Dorsolateral prefrontal cortex (tissue), 120 donors: ENCODE measurements at regions of chr1 and their contacts with region 1.

Region 1: GRCh38 chr1:95233737-95234500 is at the start of gene RWDD3:
- DNase-seq: peak; percentile 76 to 95 (median 87)
- H3K4me3 ChIP-seq: peak within 1 kb of the TSS; percentile 68 to 98 (median 89)
- H3K27ac ChIP-seq: peak within 1 kb of the TSS; percentile 51 to 98 (median 92)
- H3K27me3 ChIP-seq: no peaks in the 10 kb centered on the region
- CTCF ChIP-seq: peak; percentile 48 to 98 (median 87)
- total RNA-seq, gene RWDD3: 8.8 to 33.0 (median 17.9) TPM

Region 2: DNA sequence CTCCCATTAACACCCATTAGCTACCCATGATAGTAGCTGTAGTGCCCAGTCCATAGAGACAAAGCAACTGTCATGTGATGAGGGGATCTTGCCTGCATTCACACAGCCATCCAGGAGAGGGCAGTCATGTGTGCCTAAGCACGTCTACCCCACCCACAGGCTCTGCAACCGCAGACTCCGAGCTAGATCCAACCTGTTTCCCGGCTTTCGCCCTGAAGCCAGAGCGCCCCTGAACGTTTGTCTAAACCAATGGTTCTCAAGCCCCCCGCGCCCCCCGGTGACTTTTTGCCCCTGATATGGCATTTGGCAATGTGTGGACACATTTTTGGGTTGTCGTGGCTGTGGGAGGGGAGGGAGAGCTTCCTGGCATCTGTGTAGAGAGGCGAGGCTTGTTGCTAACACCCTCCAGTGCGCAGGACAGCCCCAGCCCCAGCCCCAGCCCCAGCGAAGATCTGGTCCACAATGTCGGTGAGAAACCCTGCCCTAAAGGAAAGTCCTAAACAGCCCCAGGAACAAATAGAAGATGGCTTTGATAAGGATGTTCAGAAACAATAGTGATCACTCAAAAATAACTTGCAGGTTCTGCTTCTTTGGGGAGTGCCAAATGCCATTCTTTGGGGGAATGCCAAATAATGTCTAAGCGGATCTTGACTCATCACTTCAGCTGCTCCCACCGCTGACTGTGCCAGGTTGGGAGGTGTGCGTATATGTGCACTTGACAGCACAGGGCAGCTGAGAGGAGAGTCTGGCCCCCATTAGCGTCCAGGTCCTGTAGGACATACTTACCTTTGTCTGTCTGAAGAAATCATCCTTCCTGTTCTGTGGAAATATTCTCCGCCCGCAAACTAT is 379.2 kb before region 1 on chr1:
- intact Hi-C with region 1: loop called in 1 of 2 experiments (anchors 2 kb)
- DNase-seq: peak; percentile 73 to 92 (median 86)
- H3K4me3 ChIP-seq: peak overlapping the region; percentile 9 to 74 (median 51)
- H3K27ac ChIP-seq: peak overlapping the region in 39 of 59 donors; percentile 6 to 81 (median 51)
- H3K27me3 ChIP-seq: no peaks in the 10 kb centered on the region
- CTCF ChIP-seq: peak; percentile 76 to 98 (median 94)

Region 3: GRCh38 chr1:94863919-94864318 is 370.0 kb before region 1 on chr1:
- intact Hi-C with region 1: loop called in 1 of 2 experiments (anchors 5 kb)
- DNase-seq: peak in 1 of 10 donors; percentile 19
- H3K4me3 ChIP-seq: no peak overlapping the region
- H3K27ac ChIP-seq: peak overlapping the region in 54 of 59 donors; percentile 33 to 92 (median 78)
- H3K27me3 ChIP-seq: no peaks in the 10 kb centered on the region
- CTCF ChIP-seq: no peak

Region 4: DNA sequence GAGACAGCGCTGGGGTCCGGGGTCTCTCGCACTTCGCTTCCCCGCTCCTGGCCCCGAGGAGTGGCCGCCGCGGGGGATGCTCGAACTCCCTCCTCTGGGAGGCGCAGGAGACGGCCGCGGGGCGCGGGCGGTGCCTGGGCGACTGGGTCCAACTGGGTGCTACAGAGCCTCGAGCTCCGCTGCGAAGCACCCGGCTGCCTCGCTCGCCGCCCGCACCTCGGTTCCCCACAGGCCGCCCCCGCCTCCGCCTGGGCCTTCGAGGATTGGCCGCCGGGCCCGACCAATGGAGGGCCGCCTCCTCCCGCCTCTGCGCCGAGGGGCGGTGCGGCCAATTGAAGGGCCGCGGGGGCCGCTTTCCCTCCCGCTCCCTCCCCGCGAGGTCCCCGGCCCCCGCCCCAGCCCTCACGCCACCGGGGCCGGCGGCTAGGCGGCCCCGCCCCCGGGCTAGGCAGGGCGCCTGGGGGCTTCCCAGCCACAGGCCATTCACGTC is 307.0 kb before region 1 on chr1 and contains the start of gene CNN3:
- intact Hi-C with region 1: loop called (anchors 2 to 5 kb)
- DNase-seq: peak; percentile 87 to 96 (median 92)
- H3K4me3 ChIP-seq: peak within 1 kb of the TSS; percentile 67 to 96 (median 88)
- H3K27ac ChIP-seq: peak within 1 kb of the TSS; percentile 75 to 100 (median 98)
- H3K27me3 ChIP-seq: no peaks in the 10 kb centered on the region
- CTCF ChIP-seq: peak in 15 of 56 donors; percentile 1 to 30 (median 15)
- total RNA-seq, gene CNN3: 91.8 to 419 (median 154) TPM

Region 5: GRCh38 chr1:95072532-95073419 is 161.1 kb before region 1 on chr1 and contains the start of gene ALG14:
- intact Hi-C with region 1: loop called (anchors 2 kb)
- DNase-seq: peak; percentile 89 to 94 (median 92)
- H3K4me3 ChIP-seq: peak within 1 kb of the TSS; percentile 47 to 92 (median 77)
- H3K27ac ChIP-seq: peak within 1 kb of the TSS; percentile 85 to 100 (median 98)
- H3K27me3 ChIP-seq: no peaks in the 10 kb centered on the region
- CTCF ChIP-seq: peak in 31 of 56 donors; percentile 2 to 54 (median 19)
- total RNA-seq, gene ALG14: 2.4 to 18.5 (median 8.3) TPM

Region 6: DNA sequence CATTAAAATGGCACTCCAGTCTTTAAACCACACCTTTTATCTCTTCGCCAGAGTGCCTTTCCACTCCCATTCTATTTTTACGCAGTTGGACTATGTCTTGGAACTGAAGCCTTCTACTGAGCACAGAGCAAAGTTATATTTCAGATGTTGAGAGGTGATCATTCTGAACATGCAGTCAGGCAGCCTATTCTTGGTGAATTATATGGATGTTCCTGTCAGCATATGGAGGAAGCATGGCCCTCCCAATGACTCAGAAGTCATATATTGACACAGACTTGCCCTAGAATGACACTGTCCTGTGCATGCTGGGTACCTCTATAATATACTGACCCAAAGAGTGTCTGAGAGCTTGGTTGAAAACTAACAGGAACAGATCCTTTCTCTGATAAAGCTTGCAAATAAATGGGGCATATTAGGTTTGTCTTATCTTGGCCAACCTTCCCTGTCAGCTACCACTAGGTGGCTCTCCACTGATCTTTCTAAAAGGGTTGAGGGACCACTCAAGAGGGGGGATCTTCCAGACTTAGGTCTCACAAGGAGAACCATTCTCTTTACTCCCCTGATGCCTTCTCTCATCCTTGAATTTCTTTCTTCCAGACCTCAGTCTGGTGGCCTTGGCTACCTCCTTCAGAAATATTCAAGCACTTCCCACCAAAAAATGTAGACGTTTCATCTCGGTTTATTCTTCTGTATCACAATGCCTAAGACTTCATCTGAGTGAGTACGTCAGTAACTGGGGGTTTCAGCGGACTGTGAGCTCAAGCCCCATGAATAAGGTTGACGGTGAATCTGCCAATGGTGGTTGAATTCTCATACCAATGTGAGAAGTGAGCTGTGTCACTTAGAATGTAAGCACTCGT is 149.4 kb before region 1 on chr1:
- intact Hi-C with region 1: loop called in 1 of 2 experiments (anchors 2 kb)
- DNase-seq: peak in 2 of 10 donors; percentile 17 to 33
- H3K4me3 ChIP-seq: no peak overlapping the region
- H3K27ac ChIP-seq: no peak overlapping the region
- H3K27me3 ChIP-seq: no peaks in the 10 kb centered on the region
- CTCF ChIP-seq: peak; percentile 29 to 81 (median 65)

Region 7: GRCh38 chr1:95116580-95117206 is 117.2 kb before region 1 on chr1:
- intact Hi-C with region 1: loop called (anchors 2 kb)
- DNase-seq: peak in 9 of 10 donors; percentile 53 to 74 (median 61)
- H3K4me3 ChIP-seq: peak overlapping the region; percentile 41 to 92 (median 77)
- H3K27ac ChIP-seq: peak overlapping the region in 57 of 59 donors; percentile 20 to 92 (median 76)
- H3K27me3 ChIP-seq: no peaks in the 10 kb centered on the region
- CTCF ChIP-seq: peak; percentile 13 to 71 (median 49)

Region 8: GRCh38 chr1:95168028-95168427 is 65.9 kb before region 1 on chr1:
- intact Hi-C with region 1: no loop called
- DNase-seq: no peak
- H3K4me3 ChIP-seq: no peak overlapping the region
- H3K27ac ChIP-seq: no peak overlapping the region
- H3K27me3 ChIP-seq: no peaks in the 10 kb centered on the region
- CTCF ChIP-seq: no peak

Region 9: GRCh38 chr1:95183952-95184351 is 50.0 kb before region 1 on chr1:
- intact Hi-C with region 1: no loop called
- DNase-seq: no peak
- H3K4me3 ChIP-seq: no peak overlapping the region
- H3K27ac ChIP-seq: peak overlapping the region in 8 of 59 donors; percentile 7 to 68 (median 50)
- H3K27me3 ChIP-seq: no peaks in the 10 kb centered on the region
- CTCF ChIP-seq: no peak